ENCODE measurements at regions of chr2 and their contacts with region 1.

Region 1: DNA sequence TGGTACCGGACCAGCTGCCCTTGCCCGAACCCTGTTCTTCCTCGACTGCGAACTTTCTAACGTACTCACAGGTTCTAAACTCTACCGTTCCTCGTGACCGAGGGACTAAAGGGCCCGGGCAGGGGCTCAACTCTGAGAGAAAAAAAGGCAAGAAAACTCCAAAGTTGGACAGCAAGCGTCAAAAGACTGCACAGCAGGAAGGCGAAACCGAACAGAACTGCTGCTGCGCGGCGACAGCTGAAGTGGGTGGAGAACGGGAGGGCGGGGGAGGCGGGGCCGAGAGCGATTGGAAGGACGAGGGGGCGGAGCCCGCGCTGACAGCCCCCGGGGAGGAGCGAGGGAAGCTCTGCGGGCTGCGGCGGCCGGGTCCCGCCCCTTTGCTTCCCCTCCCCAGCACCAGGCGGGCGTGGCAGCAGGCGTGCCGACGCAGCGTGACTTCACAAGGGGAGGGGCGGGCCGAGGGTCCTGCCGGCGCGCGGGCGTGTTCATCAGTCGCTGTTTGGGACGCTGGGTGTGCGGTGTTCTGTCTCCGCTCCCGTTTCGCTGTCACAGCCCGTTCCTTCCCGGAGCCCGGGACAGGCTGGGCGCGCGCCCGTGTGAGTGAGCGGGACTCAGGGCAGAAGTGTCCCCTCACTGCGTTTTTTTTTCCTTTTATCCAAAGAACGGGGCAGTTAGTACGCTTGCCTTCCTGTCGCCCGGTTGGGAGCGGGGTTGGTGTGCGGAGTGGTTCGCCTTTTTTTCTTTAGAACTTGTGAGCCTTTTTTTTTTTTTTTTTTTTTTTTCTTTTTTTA is at the start of gene NABP1:
- DNase-seq: peak; percentile 98 to 99 (median 98)
- H3K4me3 ChIP-seq: peak within 1 kb of the TSS; percentile 88 to 97
- H3K4me3 Mint-ChIP-seq: peak within 1 kb of the TSS; percentile 90 to 100 (median 99)
- H3K27ac ChIP-seq: peak within 1 kb of the TSS; percentile 93
- H3K27ac Mint-ChIP-seq: peak within 1 kb of the TSS; percentile 97 to 100 (median 99)
- H3K4me1 ChIP-seq: peaks cover 66% of the 10 kb centered on the region
- H3K4me1 Mint-ChIP-seq: peaks cover 37 to 80% (median 52%) of the 10 kb centered on the region in 4 donors
- H3K27me3 ChIP-seq: no peaks in the 10 kb centered on the region
- H3K27me3 Mint-ChIP-seq: no peaks in the 10 kb centered on the region
- total RNA-seq, gene NABP1: 107 to 111 TPM

Region 2: GRCh38 chr2:190648289-190649034 is 1029.4 kb before region 1 on chr2:
- CTCF ChIA-PET with region 1: no interaction called
- POLR2A ChIA-PET with region 1: no interaction called
- intact Hi-C with region 1: loop called (anchors 10 kb)
- DNase-seq: peak; percentile 91 to 94 (median 92)
- H3K4me3 ChIP-seq: peak overlapping the region; percentile 31 to 57
- H3K4me3 Mint-ChIP-seq: peak overlapping the region; percentile 78 to 91 (median 85)
- H3K27ac ChIP-seq: peak overlapping the region; percentile 72
- H3K27ac Mint-ChIP-seq: peak overlapping the region; percentile 90 to 96 (median 93)
- H3K4me1 ChIP-seq: peaks cover 38% of the 10 kb centered on the region
- H3K4me1 Mint-ChIP-seq: peaks cover 19 to 49% (median 29%) of the 10 kb centered on the region in 4 donors
- H3K27me3 ChIP-seq: no peaks in the 10 kb centered on the region
- H3K27me3 Mint-ChIP-seq: no peaks in the 10 kb centered on the region

Region 3: GRCh38 chr2:191150600-191151330 is 527.1 kb before region 1 on chr2 and contains the start of gene STAT4:
- CTCF ChIA-PET with region 1: no interaction called
- POLR2A ChIA-PET with region 1: interaction called, 7 read pairs
- intact Hi-C with region 1: loop called (anchors 1 kb)
- DNase-seq: peak; percentile 87 to 95 (median 89)
- H3K4me3 ChIP-seq: peak within 1 kb of the TSS; percentile 89 to 92
- H3K4me3 Mint-ChIP-seq: peak within 1 kb of the TSS; percentile 81 to 98 (median 96)
- H3K27ac ChIP-seq: peak within 1 kb of the TSS; percentile 99
- H3K27ac Mint-ChIP-seq: peak within 1 kb of the TSS; percentile 93 to 100 (median 98)
- H3K4me1 ChIP-seq: peaks cover 42% of the 10 kb centered on the region
- H3K4me1 Mint-ChIP-seq: peaks cover 31 to 74% (median 48%) of the 10 kb centered on the region in 4 donors
- H3K27me3 ChIP-seq: no peaks in the 10 kb centered on the region
- H3K27me3 Mint-ChIP-seq: no peaks in the 10 kb centered on the region
- total RNA-seq, gene STAT4: 114 to 119 TPM

Region 4: DNA sequence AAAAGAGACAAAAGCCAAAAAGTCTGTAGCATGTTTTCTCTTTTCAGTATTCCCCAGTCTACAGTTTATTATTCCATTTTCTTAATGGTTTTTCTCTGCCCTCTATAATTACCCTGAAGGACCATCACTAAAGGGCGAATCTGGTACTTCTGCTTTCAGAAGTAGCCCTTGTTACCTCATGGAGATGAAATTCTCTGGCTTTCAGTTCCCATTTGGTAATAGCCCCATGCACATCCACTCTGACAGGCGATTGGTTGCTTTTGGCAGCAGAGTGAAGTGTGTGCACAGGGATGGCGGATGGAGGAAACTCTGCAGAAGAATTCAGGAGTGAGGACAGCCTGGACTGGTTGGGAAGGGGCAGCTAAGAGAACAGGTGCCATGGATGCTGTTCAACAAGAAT is 66.2 kb before region 1 on chr2:
- CTCF ChIA-PET with region 1: interaction called, 42 read pairs
- POLR2A ChIA-PET with region 1: interaction called, 602 read pairs
- intact Hi-C with region 1: no loop called
- DNase-seq: no peak
- H3K4me3 ChIP-seq: no peak overlapping the region
- H3K4me3 Mint-ChIP-seq: no peak overlapping the region
- H3K27ac ChIP-seq: no peak overlapping the region
- H3K27ac Mint-ChIP-seq: no peak overlapping the region
- H3K4me1 ChIP-seq: peaks cover 1% of the 10 kb centered on the region
- H3K4me1 Mint-ChIP-seq: peaks cover 1 to 7% (median 4%) of the 10 kb centered on the region in 4 donors
- H3K27me3 ChIP-seq: no peaks in the 10 kb centered on the region
- H3K27me3 Mint-ChIP-seq: no peaks in the 10 kb centered on the region

Region 5: GRCh38 chr2:191637182-191638078 is 40.4 kb before region 1 on chr2:
- CTCF ChIA-PET with region 1: interaction called, 12 read pairs
- POLR2A ChIA-PET with region 1: interaction called, 602 read pairs
- intact Hi-C with region 1: loop called (anchors 1 kb)
- DNase-seq: peak; percentile 33 to 52 (median 39)
- H3K4me3 ChIP-seq: peak overlapping the region; percentile 0 to 7
- H3K4me3 Mint-ChIP-seq: peak overlapping the region; percentile 51 to 80 (median 70)
- H3K27ac ChIP-seq: peak overlapping the region; percentile 36
- H3K27ac Mint-ChIP-seq: peak overlapping the region; percentile 84 to 92 (median 86)
- H3K4me1 ChIP-seq: peaks cover 54% of the 10 kb centered on the region
- H3K4me1 Mint-ChIP-seq: peaks cover 48 to 68% (median 53%) of the 10 kb centered on the region in 4 donors
- H3K27me3 ChIP-seq: no peaks in the 10 kb centered on the region
- H3K27me3 Mint-ChIP-seq: no peaks in the 10 kb centered on the region

Region 6: GRCh38 chr2:191666732-191667131 is 11.1 kb before region 1 on chr2:
- CTCF ChIA-PET with region 1: interaction called, 10 read pairs
- POLR2A ChIA-PET with region 1: interaction called, 35 read pairs
- intact Hi-C with region 1: loop called (anchors 2 kb)
- DNase-seq: no peak
- H3K4me3 ChIP-seq: no peak overlapping the region
- H3K4me3 Mint-ChIP-seq: no peak overlapping the region
- H3K27ac ChIP-seq: no peak overlapping the region
- H3K27ac Mint-ChIP-seq: peak overlapping the region in 1 of 7 donors; percentile 38
- H3K4me1 ChIP-seq: peaks cover 9% of the 10 kb centered on the region
- H3K4me1 Mint-ChIP-seq: peaks cover 5 to 8% (median 7%) of the 10 kb centered on the region in 4 donors
- H3K27me3 ChIP-seq: no peaks in the 10 kb centered on the region
- H3K27me3 Mint-ChIP-seq: no peaks in the 10 kb centered on the region

Region 7: DNA sequence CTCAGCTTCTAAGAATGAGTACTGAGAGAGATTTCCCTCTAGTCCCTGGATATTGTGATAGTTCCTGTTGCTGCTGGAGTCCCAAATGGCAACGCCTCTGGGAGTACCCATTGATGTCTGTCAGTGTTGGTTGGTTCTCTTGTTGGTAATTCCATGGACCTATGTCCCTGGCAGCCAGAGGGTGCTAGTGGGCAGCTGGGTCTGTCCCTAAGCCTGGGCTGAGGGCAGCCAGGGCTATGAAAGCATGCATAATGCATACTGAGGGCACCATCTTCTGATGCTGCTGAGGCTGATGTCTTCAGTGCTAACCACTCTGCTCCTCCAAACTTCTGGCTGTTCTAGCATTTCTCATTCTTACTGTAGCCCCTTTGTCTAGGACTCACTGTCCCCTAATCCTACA is 36.0 kb after region 1 on chr2:
- CTCF ChIA-PET with region 1: no interaction called
- POLR2A ChIA-PET with region 1: no interaction called
- intact Hi-C with region 1: no loop called
- DNase-seq: no peak
- H3K4me3 ChIP-seq: no peak overlapping the region
- H3K4me3 Mint-ChIP-seq: no peak overlapping the region
- H3K27ac ChIP-seq: no peak overlapping the region
- H3K27ac Mint-ChIP-seq: no peak overlapping the region
- H3K4me1 ChIP-seq: no peaks in the 10 kb centered on the region
- H3K4me1 Mint-ChIP-seq: peaks cover 0 to 1% (median 0%) of the 10 kb centered on the region in 4 donors
- H3K27me3 ChIP-seq: no peaks in the 10 kb centered on the region
- H3K27me3 Mint-ChIP-seq: no peaks in the 10 kb centered on the region

Measured in CD4-positive, alpha-beta memory T cell (primary cell).